GM23248 (cell line): ENCODE measurements at regions of chr17 and their contacts with region 1.

Region 1: GRCh38 chr17:30477083-30477773 is at the start of gene GOSR1:
- DNase-seq: peak; percentile 99
- H3K4me3 ChIP-seq: peak within 1 kb of the TSS; percentile 87
- H3K27ac ChIP-seq: peak within 1 kb of the TSS; percentile 91
- H3K4me1 ChIP-seq: peaks cover 18% of the 10 kb centered on the region
- H3K27me3 ChIP-seq: no peaks in the 10 kb centered on the region
- total RNA-seq, gene GOSR1: 16.9 and 20.2 TPM in 2 replicates

Region 2: GRCh38 chr17:29514792-29515191 is 962.4 kb before region 1 on chr17:
- in situ Hi-C with region 1: no loop called
- DNase-seq: peak; percentile 22
- H3K4me3 ChIP-seq: no peak overlapping the region
- H3K27ac ChIP-seq: no peak overlapping the region
- H3K4me1 ChIP-seq: 0 out of 2 replicates have a peak, but pooled peaks cover 7% of the 10 kb centered on the region
- H3K27me3 ChIP-seq: no peaks in the 10 kb centered on the region

Region 3: DNA sequence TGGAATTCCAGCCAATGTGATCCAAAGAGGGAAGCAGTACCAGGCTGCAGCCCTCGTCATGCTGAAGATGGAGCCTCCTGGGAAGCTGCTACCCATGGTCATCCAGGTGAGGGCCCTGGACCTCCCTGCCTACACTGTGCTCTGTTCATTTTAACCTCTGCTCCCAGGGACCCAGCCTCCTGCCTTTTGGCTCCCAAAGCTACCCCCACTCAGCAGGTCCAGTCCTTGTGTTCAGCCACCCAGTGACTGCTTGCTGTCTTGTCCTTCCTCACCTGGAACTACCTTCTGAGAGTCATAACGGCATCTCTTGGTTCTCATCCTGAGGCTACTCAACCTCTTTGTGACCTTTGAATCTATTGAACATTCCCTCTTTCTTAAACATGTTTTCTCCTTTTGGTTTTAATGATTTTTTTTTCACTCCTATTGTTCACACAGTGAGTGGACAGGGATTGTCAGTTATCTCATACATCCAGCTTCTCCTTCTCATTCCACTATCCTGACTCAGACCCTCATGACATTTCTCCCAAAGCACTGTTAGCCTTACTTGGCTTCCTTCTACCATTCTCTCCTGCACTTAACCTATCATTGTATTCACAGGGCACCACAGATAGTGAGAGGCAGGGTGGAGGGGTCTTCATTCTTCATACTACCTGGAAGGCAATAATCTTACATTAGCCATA is 53.3 kb after region 1 on chr17:
- in situ Hi-C with region 1: loop called (anchors 10 kb)
- DNase-seq: peak; percentile 79
- H3K4me3 ChIP-seq: no peak overlapping the region
- H3K27ac ChIP-seq: 0 out of 2 replicates have a peak overlapping the region, but pooled peaks have one; percentile 20
- H3K4me1 ChIP-seq: peaks cover 12% of the 10 kb centered on the region
- H3K27me3 ChIP-seq: no peaks in the 10 kb centered on the region